HCT116 (cell line): ENCODE measurements at regions of chr20 and their contacts with region 1.

Region 1: DNA sequence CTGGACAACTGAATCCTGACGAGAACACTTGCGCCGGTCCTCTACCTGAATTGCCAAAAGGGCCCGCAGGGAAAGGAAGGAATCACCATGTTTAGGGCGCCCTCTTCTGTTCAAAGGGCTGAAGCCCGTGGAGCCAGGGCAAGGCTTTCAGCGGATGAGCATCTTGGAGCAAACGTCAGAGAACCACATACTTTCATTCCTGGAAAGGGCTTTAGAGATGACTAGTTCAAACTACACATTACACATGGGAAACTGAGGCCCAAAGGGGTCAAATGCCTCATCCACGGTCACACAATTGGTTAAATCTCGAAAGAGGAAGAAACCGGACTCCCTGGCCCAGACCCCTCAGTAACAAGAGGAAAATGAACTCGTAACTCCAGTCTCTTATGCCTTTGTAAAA is 11.5 kb upstream of the ZNF133 start:
- DNase-seq: peak; percentile 67
- ATAC-seq: peak; percentile 98
- H3K4me3 ChIP-seq: no peak overlapping the region
- H3K27ac ChIP-seq: no peak overlapping the region
- H3K4me1 ChIP-seq: 0 out of 4 replicates have a peak, but pooled peaks cover 0 to 4% of the 10 kb centered on the region in 2 experiments
- H3K27me3 ChIP-seq: no peaks in the 10 kb centered on the region
- CTCF ChIP-seq: peak; percentile 77 to 89 (median 87); a peak in 5 of 6 replicates
- POLR2A ChIP-seq: no peak
- RAD21 ChIP-seq: peak; percentile 94

Region 2: GRCh38 chr20:17968366-17969279 is 308.2 kb before region 1 on chr20 and contains the starts of genes MGME1 and SNX5:
- CTCF ChIA-PET with region 1: interaction called, 6 read pairs
- POLR2A ChIA-PET with region 1: no interaction called
- RAD21 ChIA-PET with region 1: no interaction called
- intact Hi-C with region 1: loop called (anchors 10 kb)
- DNase-seq: peak; percentile 99
- ATAC-seq: peak; percentile 92
- H3K4me3 ChIP-seq: peak within 1 kb of the TSS; percentile 75 to 86
- H3K27ac ChIP-seq: peak within 1 kb of the TSS; percentile 99
- H3K4me1 ChIP-seq: peaks cover 26 to 58% of the 10 kb centered on the region in 2 experiments
- H3K27me3 ChIP-seq: no peaks in the 10 kb centered on the region
- CTCF ChIP-seq: no peak
- POLR2A ChIP-seq: peak; percentile 85
- RAD21 ChIP-seq: no peak
- total RNA-seq, gene MGME1: 37.1 TPM
- total RNA-seq, gene SNX5: 159 TPM

Region 3: DNA sequence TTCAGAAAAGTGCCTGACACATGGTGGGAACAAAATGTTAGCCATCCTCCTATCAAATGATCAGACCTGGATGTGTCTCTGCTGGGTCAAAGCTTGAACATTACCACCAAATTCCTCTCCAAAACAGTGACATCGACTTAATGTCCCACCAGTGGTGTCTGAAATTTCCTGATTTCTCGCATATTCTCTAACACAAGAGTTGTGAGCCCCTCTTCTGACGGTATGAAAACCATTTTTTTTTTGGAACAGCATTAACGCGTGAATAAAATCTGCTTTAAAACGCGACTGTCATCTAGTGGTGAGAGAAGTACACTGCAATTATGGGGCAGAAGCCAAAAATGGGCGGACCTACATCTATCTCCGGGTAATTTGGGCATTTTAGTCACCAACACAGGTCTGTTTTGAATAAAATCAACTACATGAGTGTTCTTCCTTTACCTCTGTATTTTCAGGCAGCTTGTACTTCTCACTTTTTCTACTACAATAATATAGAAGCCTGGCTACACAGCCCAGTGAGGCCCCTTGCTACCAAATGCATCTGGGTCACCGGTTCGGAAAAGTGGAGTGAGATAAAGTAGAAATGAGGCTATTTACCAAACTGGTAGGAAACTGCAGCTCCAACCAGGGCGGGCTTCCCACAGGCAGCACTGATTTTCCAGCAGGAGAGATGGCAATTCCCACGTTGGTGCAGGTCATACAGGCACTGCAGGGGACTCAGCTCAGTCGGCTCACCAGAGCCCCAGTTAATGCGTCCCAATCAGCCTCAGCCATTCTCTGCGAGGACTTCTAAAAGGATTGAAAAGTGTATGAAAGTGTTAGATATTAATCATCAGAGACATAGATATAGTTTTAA is 280.6 kb before region 1 on chr20:
- CTCF ChIA-PET with region 1: no interaction called
- POLR2A ChIA-PET with region 1: no interaction called
- RAD21 ChIA-PET with region 1: no interaction called
- intact Hi-C with region 1: loop called (anchors 10 kb)
- DNase-seq: peak; percentile 26
- ATAC-seq: peak; percentile 76
- H3K4me3 ChIP-seq: no peak overlapping the region
- H3K27ac ChIP-seq: no peak overlapping the region
- H3K4me1 ChIP-seq: peaks cover 0 to 6% of the 10 kb centered on the region in 2 experiments; a peak in 2 of 4 replicates
- H3K27me3 ChIP-seq: no peaks in the 10 kb centered on the region
- CTCF ChIP-seq: peak; percentile 81 to 96 (median 92)
- POLR2A ChIP-seq: no peak
- RAD21 ChIP-seq: peak; percentile 85

Region 4: GRCh38 chr20:18056174-18057100 is 220.4 kb before region 1 on chr20:
- CTCF ChIA-PET with region 1: no interaction called
- POLR2A ChIA-PET with region 1: no interaction called
- RAD21 ChIA-PET with region 1: interaction called in 1 of 2 experiments, 7 read pairs
- intact Hi-C with region 1: loop called (anchors 5 kb)
- DNase-seq: no peak
- ATAC-seq: peak; percentile 58
- H3K4me3 ChIP-seq: peak overlapping the region; percentile 49 to 60
- H3K27ac ChIP-seq: no peak overlapping the region; the same call in 1 of the 2 replicates
- H3K4me1 ChIP-seq: peaks cover 18 to 36% of the 10 kb centered on the region in 2 experiments
- H3K27me3 ChIP-seq: peaks cover 17% of the 10 kb centered on the region; the same call in 1 of the 2 replicates
- CTCF ChIP-seq: no peak
- POLR2A ChIP-seq: no peak
- RAD21 ChIP-seq: no peak

Region 5: GRCh38 chr20:18137412-18138265 is 139.2 kb before region 1 on chr20 and contains the starts of genes KAT14 and PET117:
- CTCF ChIA-PET with region 1: no interaction called
- POLR2A ChIA-PET with region 1: no interaction called
- RAD21 ChIA-PET with region 1: no interaction called
- intact Hi-C with region 1: loop called (anchors 5 kb)
- DNase-seq: peak; percentile 79
- ATAC-seq: peak; percentile 90
- H3K4me3 ChIP-seq: peak within 1 kb of the TSS; percentile 78 to 91
- H3K27ac ChIP-seq: peak within 1 kb of the TSS; percentile 93
- H3K4me1 ChIP-seq: peaks cover 7 to 12% of the 10 kb centered on the region in 2 experiments
- H3K27me3 ChIP-seq: no peaks in the 10 kb centered on the region
- CTCF ChIP-seq: no peak
- POLR2A ChIP-seq: peak; percentile 20
- RAD21 ChIP-seq: 0 out of 2 replicates have a peak, but pooled peaks have one; percentile 12
- total RNA-seq, gene KAT14: 11.4 TPM
- total RNA-seq, gene PET117: 22.3 TPM

Region 6: DNA sequence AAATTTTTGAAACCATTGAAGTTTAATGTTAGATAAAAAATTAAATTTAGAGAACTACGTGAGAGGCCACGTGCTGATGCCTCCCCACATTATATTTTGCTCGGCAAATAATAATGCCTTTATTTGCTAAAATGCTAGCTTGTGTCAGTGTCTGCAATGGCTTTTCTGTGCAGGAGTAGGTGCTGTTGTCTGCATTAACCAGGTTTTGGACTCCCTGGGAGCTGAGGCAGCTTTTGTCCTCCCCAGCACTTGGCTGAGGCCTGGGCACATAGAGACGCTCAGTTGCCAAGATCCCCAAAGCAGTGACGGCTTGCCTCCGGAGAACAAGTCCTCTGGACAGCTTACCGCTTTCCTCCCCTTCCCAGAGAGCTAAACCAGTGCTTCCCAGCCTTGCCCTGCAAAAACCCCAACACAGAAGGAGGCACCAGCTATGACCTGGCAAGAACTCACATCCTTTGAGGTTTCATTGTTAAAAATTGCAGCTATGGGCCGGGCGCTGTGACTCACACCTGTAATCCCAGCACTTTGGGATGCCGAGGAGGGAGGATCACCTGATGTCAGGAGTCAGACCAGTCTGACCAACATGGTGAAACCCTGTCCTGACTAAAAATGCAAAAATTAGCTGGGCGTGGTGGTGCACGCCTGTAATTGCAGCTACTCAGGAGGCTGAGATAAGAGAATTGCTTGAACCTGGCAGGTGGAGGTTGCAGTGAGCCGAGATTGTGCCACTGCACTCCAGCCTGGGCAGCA is 79.3 kb before region 1 on chr20:
- CTCF ChIA-PET with region 1: interaction called, 9 read pairs
- POLR2A ChIA-PET with region 1: no interaction called
- RAD21 ChIA-PET with region 1: no interaction called
- intact Hi-C with region 1: loop called (anchors 1 kb)
- DNase-seq: peak; percentile 71
- ATAC-seq: peak; percentile 93
- H3K4me3 ChIP-seq: peak overlapping the region in 1 of 2 experiments; percentile 16; a peak in 2 of 4 replicates
- H3K27ac ChIP-seq: peak overlapping the region; percentile 51
- H3K4me1 ChIP-seq: peaks cover 12 to 22% of the 10 kb centered on the region in 2 experiments
- H3K27me3 ChIP-seq: no peaks in the 10 kb centered on the region
- CTCF ChIP-seq: peak in 2 of 3 experiments; percentile 51 to 57; a peak in 4 of 6 replicates
- POLR2A ChIP-seq: no peak
- RAD21 ChIP-seq: peak; percentile 52